ENCODE measurements at regions of chr20 and their contacts with region 1.

Region 1: GRCh38 chr20:9588706-9589105 is 74.3 kb downstream of the LAMP5 start:
- DNase-seq: no peak
- ATAC-seq: no peak
- H3K4me3 ChIP-seq: no peak overlapping the region
- H3K4me3 Mint-ChIP-seq: no peak overlapping the region
- H3K27ac ChIP-seq: no peak overlapping the region
- H3K27ac Mint-ChIP-seq: no peak overlapping the region
- H3K4me1 ChIP-seq: no peaks in the 10 kb centered on the region
- H3K4me1 Mint-ChIP-seq: no peaks in the 10 kb centered on the region
- H3K27me3 ChIP-seq: no peaks in the 10 kb centered on the region
- H3K27me3 Mint-ChIP-seq: peaks cover 0 to 12% (median 6%) of the 10 kb centered on the region in 5 donors

Region 2: GRCh38 chr20:9407805-9408421 is 180.8 kb before region 1 on chr20:
- CTCF ChIA-PET with region 1: no interaction called
- POLR2A ChIA-PET with region 1: no interaction called
- intact Hi-C with region 1: loop called in 1 of 2 experiments (anchors 5 kb)
- DNase-seq: peak in 5 of 9 donors; percentile 7 to 38 (median 31)
- ATAC-seq: peak; percentile 59
- H3K4me3 ChIP-seq: no peak overlapping the region
- H3K4me3 Mint-ChIP-seq: no peak overlapping the region
- H3K27ac ChIP-seq: no peak overlapping the region
- H3K27ac Mint-ChIP-seq: no peak overlapping the region
- H3K4me1 ChIP-seq: no peaks in the 10 kb centered on the region
- H3K4me1 Mint-ChIP-seq: no peaks in the 10 kb centered on the region
- H3K27me3 ChIP-seq: no peaks in the 10 kb centered on the region
- H3K27me3 Mint-ChIP-seq: no peaks in the 10 kb centered on the region

Region 3: GRCh38 chr20:9503526-9504245 is 85.0 kb before region 1 on chr20:
- CTCF ChIA-PET with region 1: no interaction called
- POLR2A ChIA-PET with region 1: no interaction called
- intact Hi-C with region 1: no loop called
- DNase-seq: no peak
- ATAC-seq: peak; percentile 40
- H3K4me3 ChIP-seq: no peak overlapping the region
- H3K4me3 Mint-ChIP-seq: no peak overlapping the region
- H3K27ac ChIP-seq: no peak overlapping the region
- H3K27ac Mint-ChIP-seq: no peak overlapping the region
- H3K4me1 ChIP-seq: no peaks in the 10 kb centered on the region
- H3K4me1 Mint-ChIP-seq: peaks cover 0 to 1% (median 0%) of the 10 kb centered on the region in 7 donors
- H3K27me3 ChIP-seq: no peaks in the 10 kb centered on the region
- H3K27me3 Mint-ChIP-seq: peaks cover 8 to 23% (median 21%) of the 10 kb centered on the region in 5 donors

Measured in naive thymus-derived CD4-positive, alpha-beta T cell (primary cell).